ENCODE measurements at regions of chr1 and their contacts with region 1.

Region 1: DNA sequence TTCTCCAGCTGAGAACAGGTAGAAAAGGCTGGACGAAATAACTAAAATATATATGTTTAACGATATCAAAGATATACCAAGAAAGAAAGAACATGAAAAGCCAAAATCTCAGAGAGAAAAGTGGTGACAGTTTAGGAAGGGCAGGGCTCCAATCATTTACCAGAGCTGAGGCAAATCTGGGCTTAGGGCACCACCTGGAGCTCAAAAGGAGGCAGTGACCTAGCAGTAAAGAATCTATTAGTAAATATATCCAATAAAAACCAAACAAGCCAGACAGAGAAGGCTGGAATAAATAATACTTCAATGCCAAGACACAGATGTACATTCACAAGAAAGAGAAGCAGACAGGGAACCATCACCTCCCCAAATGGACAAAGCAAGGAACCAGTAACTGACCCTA is 43.5 kb downstream of the CHIA start:
- DNase-seq: peak in 1 of 2 experiments; percentile 40
- H3K4me3 ChIP-seq: no peak overlapping the region
- H3K4me3 Mint-ChIP-seq: no peak overlapping the region
- H3K27ac Mint-ChIP-seq: no peak overlapping the region
- H3K4me1 ChIP-seq: no peaks in the 10 kb centered on the region
- H3K4me1 Mint-ChIP-seq: no peaks in the 10 kb centered on the region
- H3K27me3 ChIP-seq: no peaks in the 10 kb centered on the region
- H3K27me3 Mint-ChIP-seq: no peaks in the 10 kb centered on the region
- CTCF ChIP-seq: peak; percentile 42 to 62

Region 2: GRCh38 chr1:111030590-111030989 is 303.6 kb before region 1 on chr1:
- CTCF ChIA-PET with region 1: no interaction called
- POLR2A ChIA-PET with region 1: no interaction called
- intact Hi-C with region 1: loop called (anchors 10 kb)
- DNase-seq: peak in 1 of 2 experiments; percentile 59
- H3K4me3 ChIP-seq: no peak overlapping the region
- H3K4me3 Mint-ChIP-seq: no peak overlapping the region
- H3K27ac Mint-ChIP-seq: no peak overlapping the region
- H3K4me1 ChIP-seq: no peaks in the 10 kb centered on the region
- H3K4me1 Mint-ChIP-seq: peaks cover 5% of the 10 kb centered on the region
- H3K27me3 ChIP-seq: no peaks in the 10 kb centered on the region
- H3K27me3 Mint-ChIP-seq: peaks cover 8% of the 10 kb centered on the region
- CTCF ChIP-seq: peak; percentile 60 to 62

Region 3: DNA sequence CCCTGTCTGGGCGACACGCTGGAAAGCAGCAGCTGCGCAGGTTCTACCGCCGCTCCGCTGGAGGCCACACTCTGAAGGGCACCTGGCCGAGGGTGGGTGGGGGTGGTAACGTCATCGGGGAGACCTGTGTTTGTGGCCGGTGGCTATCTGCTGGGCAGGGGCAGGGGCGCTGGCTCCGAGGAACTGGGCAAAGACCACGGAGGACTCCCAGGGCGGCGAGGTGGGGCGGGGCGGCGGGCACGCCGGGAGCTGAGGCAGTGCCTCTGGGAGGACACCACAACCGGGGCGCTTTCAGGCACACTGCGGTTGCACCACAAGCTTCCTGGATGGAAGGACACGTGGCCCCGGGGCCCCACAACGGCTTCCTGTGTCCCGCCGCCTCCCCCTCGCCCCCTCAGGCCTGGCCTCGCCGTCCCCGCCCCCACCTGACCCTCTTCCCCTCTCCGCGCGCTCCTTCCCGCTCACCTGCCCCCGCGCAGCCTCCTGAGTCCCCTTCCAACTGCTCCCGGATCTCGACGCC is 130.4 kb before region 1 on chr1:
- CTCF ChIA-PET with region 1: no interaction called
- POLR2A ChIA-PET with region 1: no interaction called
- intact Hi-C with region 1: loop called (anchors 5 kb)
- DNase-seq: peak; percentile 80 to 89
- H3K4me3 ChIP-seq: peak overlapping the region; percentile 54
- H3K4me3 Mint-ChIP-seq: peak overlapping the region; percentile 77
- H3K27ac Mint-ChIP-seq: peak overlapping the region; percentile 49
- H3K4me1 ChIP-seq: peaks cover 34% of the 10 kb centered on the region
- H3K4me1 Mint-ChIP-seq: peaks cover 14% of the 10 kb centered on the region
- H3K27me3 ChIP-seq: no peaks in the 10 kb centered on the region
- H3K27me3 Mint-ChIP-seq: no peaks in the 10 kb centered on the region
- CTCF ChIP-seq: no peak

Region 4: DNA sequence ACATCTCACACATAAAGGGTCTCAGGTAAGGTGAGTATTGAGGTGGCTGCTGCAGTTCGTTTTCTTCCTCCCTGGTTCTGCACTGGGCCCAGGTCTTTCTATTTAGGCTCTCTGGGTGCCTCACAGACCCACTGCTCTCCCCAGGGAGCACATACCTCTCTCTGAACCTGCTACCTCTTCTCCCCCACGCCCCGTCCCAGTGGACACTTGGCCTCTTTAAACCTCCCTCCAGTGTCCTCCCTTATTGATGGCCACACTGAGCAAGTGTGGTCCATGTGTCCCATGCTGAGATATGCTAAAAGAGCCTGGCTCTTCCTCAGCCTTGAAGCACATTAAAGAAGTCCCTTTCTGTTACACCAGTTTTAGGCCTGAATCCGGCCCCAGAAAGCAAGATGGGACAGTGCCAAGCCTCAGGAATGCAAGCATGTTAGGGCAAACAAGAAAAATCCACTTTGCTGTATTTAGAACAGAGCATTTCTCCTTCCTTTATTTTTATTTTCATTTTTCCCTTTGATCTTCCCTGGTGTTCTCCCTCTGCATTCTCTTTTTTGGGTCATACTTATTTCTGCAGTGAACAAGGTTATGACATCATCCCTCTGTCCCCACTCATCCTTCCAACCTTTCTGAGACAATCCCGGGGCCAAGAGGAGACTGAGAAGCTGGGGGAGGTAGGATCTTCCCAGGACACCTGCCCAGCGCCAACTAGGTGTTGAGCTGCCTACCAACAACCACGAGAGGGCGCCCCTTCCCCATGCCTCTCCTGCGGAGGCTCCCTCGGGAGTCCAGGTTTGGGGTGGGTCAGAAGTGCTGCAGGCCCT is 111.7 kb before region 1 on chr1:
- CTCF ChIA-PET with region 1: interaction called, 7 read pairs
- POLR2A ChIA-PET with region 1: no interaction called
- intact Hi-C with region 1: loop called (anchors 1 kb)
- DNase-seq: peak; percentile 79 to 80
- H3K4me3 ChIP-seq: no peak overlapping the region
- H3K4me3 Mint-ChIP-seq: no peak overlapping the region
- H3K27ac Mint-ChIP-seq: peak overlapping the region; percentile 21
- H3K4me1 ChIP-seq: peaks cover 13% of the 10 kb centered on the region
- H3K4me1 Mint-ChIP-seq: peaks cover 18% of the 10 kb centered on the region
- H3K27me3 ChIP-seq: no peaks in the 10 kb centered on the region
- H3K27me3 Mint-ChIP-seq: no peaks in the 10 kb centered on the region
- CTCF ChIP-seq: peak; percentile 69 to 74

Region 5: DNA sequence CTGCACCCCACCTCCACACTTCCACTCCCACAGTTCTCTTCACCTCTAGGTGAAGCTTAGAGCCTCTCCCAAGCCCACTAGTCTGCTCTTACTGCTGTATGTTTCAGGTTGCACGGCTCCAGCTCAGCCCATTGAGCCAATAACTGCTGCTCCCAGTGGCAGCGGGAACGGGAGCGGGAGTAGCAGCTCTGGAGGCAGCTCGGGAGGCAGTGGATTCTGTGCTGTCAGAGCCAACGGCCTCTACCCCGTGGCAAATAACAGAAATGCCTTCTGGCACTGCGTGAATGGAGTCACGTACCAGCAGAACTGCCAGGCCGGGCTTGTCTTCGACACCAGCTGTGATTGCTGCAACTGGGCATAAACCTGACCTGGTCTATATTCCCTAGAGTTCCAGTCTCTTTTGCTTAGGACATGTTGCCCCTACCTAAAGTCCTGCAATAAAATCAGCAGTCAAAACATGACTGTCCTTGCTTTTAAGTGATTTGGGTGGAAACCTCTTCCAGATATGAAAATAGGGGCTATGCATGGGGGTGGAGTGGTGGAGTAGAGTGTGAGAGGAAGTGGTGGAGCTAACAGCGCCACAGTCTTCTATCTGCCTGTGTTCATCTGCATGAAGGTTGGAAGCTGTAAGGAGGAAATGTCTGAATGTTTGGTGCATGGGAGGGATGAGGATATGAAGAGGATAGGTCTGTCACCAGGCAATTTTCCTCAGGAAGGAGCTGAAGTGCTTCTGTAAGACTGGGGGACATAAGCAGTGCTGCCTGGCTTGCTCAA is 13.9 kb before region 1 on chr1:
- CTCF ChIA-PET with region 1: no interaction called
- POLR2A ChIA-PET with region 1: interaction called, 15 read pairs
- intact Hi-C with region 1: no loop called
- DNase-seq: no peak
- H3K4me3 ChIP-seq: no peak overlapping the region
- H3K4me3 Mint-ChIP-seq: no peak overlapping the region
- H3K27ac Mint-ChIP-seq: no peak overlapping the region
- H3K4me1 ChIP-seq: no peaks in the 10 kb centered on the region
- H3K4me1 Mint-ChIP-seq: peaks cover 9% of the 10 kb centered on the region
- H3K27me3 ChIP-seq: no peaks in the 10 kb centered on the region
- H3K27me3 Mint-ChIP-seq: no peaks in the 10 kb centered on the region
- CTCF ChIP-seq: no peak

Region 6: GRCh38 chr1:111489604-111490003 is 155.4 kb after region 1 on chr1:
- CTCF ChIA-PET with region 1: no interaction called
- POLR2A ChIA-PET with region 1: no interaction called
- intact Hi-C with region 1: no loop called
- DNase-seq: no peak
- H3K4me3 ChIP-seq: no peak overlapping the region
- H3K4me3 Mint-ChIP-seq: no peak overlapping the region
- H3K27ac Mint-ChIP-seq: no peak overlapping the region
- H3K4me1 ChIP-seq: no peaks in the 10 kb centered on the region
- H3K4me1 Mint-ChIP-seq: no peaks in the 10 kb centered on the region
- H3K27me3 ChIP-seq: no peaks in the 10 kb centered on the region
- H3K27me3 Mint-ChIP-seq: no peaks in the 10 kb centered on the region
- CTCF ChIP-seq: no peak